ENCODE measurements at regions of chr2 and their contacts with region 1.

Region 1: DNA sequence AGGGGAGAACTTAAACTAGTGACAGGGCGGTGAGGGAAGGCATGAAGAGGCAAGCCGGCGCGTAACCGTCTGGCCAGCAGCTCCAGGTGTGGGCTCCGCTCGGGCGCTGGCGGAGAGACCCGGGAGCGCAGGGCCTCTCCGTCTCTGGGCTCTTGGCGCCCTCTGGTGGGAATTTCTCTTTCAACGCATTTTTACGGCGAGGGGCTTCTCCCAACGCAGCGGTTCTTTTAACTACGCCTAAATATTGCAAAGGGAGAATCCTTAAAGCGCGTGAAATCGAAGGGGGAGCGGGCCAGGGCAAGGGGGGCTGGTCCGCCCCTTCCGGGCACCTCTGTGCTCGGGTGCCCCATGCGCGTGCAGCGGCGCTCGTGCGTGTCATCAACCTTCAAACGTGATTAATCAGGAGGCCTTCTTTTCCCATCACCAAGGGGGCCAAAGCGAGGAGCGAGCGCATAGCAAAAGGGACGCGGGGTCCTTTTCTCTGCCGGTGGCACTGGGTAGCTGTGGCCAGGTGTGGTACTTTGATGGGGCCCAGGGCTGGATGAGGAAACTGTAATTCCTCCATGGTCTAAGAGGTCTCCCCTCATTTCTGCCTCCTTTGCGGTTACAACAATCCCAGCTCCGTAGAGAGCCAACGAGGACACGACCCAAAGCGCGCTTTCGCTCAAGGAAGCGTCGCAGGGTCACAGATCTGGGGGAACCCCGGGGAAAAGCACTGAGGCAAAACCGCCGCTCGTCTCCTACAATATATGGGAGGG is 762 bp upstream of the GAD1 start:
- DNase-seq: no peak
- H3K4me3 ChIP-seq: peak overlapping the region; percentile 1 to 41 (median 35)
- H3K27ac ChIP-seq: no peak overlapping the region
- H3K4me1 ChIP-seq: peaks cover 0 to 61% (median 56%) of the 10 kb centered on the region in 4 donors
- H3K27me3 ChIP-seq: peaks cover 77 to 82% (median 80%) of the 10 kb centered on the region in 3 donors
- CTCF ChIP-seq: peak; percentile 71 to 76 (median 73)
- EP300 ChIP-seq: no peak
- POLR2A ChIP-seq: no peak

Region 2: GRCh38 chr2:170324640-170325046 is 491.3 kb before region 1 on chr2:
- intact Hi-C with region 1: loop called (anchors 5 kb)
- DNase-seq: no peak
- H3K4me3 ChIP-seq: no peak overlapping the region
- H3K27ac ChIP-seq: no peak overlapping the region
- H3K4me1 ChIP-seq: no peaks in the 10 kb centered on the region
- H3K27me3 ChIP-seq: no peaks in the 10 kb centered on the region
- CTCF ChIP-seq: peak in 3 of 4 experiments; percentile 29 to 50 (median 31)
- EP300 ChIP-seq: no peak
- POLR2A ChIP-seq: no peak

Region 3: DNA sequence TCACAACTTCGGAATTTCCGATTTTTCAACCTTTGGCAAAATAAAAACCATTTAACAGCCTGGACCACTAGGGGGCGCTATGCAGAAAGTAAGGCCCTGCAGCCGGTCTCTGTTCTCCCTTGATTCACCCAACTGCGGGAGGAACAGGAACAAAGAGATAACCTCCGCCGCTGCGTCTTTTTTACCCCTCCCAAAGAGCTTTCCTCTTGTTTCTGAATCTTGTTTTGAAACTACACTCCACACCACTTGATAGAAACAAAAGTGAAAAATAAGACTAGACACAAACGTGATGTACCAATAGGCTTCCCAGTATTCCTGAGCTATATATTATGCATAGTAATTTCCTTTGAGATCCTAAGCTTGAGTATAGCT is 406.8 kb before region 1 on chr2:
- intact Hi-C with region 1: loop called (anchors 2 kb)
- DNase-seq: peak; percentile 84
- H3K4me3 ChIP-seq: no peak overlapping the region
- H3K27ac ChIP-seq: no peak overlapping the region
- H3K4me1 ChIP-seq: peaks cover 0 to 6% (median 4%) of the 10 kb centered on the region in 4 donors
- H3K27me3 ChIP-seq: peaks cover 0 to 10% (median 0%) of the 10 kb centered on the region in 3 donors
- CTCF ChIP-seq: peak; percentile 43 to 81 (median 74)
- EP300 ChIP-seq: no peak
- POLR2A ChIP-seq: no peak

Region 4: DNA sequence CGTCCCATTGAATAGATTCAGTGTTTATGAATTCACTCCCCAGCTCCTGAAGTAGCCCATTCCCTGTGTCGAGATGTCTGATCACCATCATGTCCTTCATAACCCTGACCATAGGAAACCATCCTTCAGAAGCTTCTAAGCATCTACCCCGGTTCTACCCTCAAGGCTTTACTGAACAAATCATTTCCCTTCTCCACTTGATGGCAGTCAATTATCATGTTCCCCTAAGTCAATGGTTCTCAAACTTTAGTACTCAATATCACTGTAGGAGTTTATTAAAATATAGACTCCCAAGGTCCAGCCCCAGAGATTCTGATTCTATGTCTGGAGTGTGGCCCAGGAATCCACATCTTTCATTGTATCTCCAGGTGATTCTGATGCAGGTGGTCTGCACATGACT is 329.2 kb before region 1 on chr2:
- intact Hi-C with region 1: loop called (anchors 5 kb)
- DNase-seq: no peak
- H3K4me3 ChIP-seq: no peak overlapping the region
- H3K27ac ChIP-seq: no peak overlapping the region
- H3K4me1 ChIP-seq: no peaks in the 10 kb centered on the region
- H3K27me3 ChIP-seq: no peaks in the 10 kb centered on the region
- CTCF ChIP-seq: no peak
- EP300 ChIP-seq: no peak
- POLR2A ChIP-seq: no peak

Region 5: DNA sequence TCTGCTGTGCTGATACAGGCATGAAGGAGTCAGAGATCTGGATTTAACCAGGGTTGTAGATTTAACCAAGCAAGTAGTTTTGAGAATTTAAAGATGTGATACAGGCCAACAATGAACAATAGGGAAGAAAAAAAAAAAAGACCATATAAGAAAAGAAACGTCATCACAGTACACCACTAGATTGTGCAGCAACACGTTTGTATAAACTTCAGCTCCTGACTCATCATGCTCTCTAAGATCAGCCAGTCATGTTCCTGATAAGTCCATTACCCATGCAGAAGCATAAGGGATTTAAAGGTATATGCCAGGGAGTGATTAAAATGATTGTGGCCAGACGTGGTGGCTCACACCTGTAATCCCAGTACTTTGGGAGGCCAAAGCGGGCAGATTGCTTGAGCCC is 68.0 kb before region 1 on chr2:
- intact Hi-C with region 1: no loop called
- DNase-seq: no peak
- H3K4me3 ChIP-seq: no peak overlapping the region
- H3K27ac ChIP-seq: no peak overlapping the region
- H3K4me1 ChIP-seq: no peaks in the 10 kb centered on the region
- H3K27me3 ChIP-seq: no peaks in the 10 kb centered on the region
- CTCF ChIP-seq: no peak
- EP300 ChIP-seq: no peak
- POLR2A ChIP-seq: no peak

Region 6: DNA sequence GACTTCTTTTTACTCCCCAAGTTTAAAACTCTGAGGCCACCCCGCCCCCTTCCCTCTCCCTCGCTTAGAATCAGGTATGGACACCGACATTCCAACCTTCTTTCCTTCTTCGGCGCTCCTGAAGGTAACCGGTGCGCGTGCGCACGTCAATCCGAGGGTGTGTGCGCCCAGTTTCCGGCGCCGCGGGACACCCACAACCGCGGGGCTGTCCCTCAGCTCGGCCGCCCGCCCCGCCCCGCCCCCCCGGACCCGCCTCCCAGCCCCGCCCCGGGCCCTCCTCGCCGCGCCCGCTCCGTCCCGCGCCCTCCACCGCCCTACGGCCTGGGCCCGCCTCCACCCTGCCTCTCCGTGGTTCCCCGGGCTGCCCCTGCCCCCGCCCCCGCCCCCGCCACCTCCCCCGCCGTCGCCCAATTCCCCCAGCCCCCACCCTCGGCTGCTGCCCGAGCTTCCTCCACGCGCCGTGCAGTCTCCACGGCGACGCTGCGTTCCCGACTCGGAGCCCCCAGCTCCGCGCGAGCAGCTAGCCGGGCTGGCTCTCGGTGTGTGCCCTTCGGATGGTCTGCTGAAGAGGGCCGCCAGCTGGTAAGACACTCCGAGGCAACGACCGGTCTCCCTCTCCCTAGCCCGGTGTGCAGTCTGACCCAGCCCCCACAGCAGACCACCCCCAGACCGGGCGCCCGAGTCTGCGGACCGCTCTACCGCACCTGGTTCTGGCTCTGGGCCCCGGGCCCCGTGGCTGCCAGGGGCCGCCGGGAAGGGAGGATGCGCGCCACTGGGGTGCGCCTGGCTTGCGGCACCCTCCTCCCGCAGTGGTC is 45.1 kb before region 1 on chr2:
- intact Hi-C with region 1: loop called (anchors 2 kb)
- DNase-seq: peak; percentile 88
- H3K4me3 ChIP-seq: peak overlapping the region; percentile 69 to 74 (median 71)
- H3K27ac ChIP-seq: peak overlapping the region; percentile 74 to 84 (median 79)
- H3K4me1 ChIP-seq: peaks cover 0 to 17% (median 8%) of the 10 kb centered on the region in 4 donors
- H3K27me3 ChIP-seq: no peaks in the 10 kb centered on the region
- CTCF ChIP-seq: no peak
- EP300 ChIP-seq: no peak
- POLR2A ChIP-seq: no peak

Measured in sigmoid colon (tissue), 7 donors.